ENCODE measurements at regions of chr7 and their contacts with region 1.

Region 1: GRCh38 chr7:107157091-107157490 is 11.7 kb upstream of the HBP1 start:
- DNase-seq: no peak
- H3K4me3 Mint-ChIP-seq: no peak overlapping the region
- H3K27ac Mint-ChIP-seq: no peak overlapping the region
- H3K4me1 Mint-ChIP-seq: no peaks in the 10 kb centered on the region
- H3K27me3 Mint-ChIP-seq: peaks cover 10% of the 10 kb centered on the region

Region 2: GRCh38 chr7:106947244-106947728 is 209.8 kb before region 1 on chr7:
- intact Hi-C with region 1: loop called (anchors 2 kb)
- DNase-seq: peak; percentile 1
- H3K4me3 Mint-ChIP-seq: no peak overlapping the region
- H3K27ac Mint-ChIP-seq: no peak overlapping the region
- H3K4me1 Mint-ChIP-seq: no peaks in the 10 kb centered on the region
- H3K27me3 Mint-ChIP-seq: peaks cover 3% of the 10 kb centered on the region

Measured in activated T-helper 1 cell treated with anti-CD3 and anti-CD28 coated beads, Interleukin-12 subunit alpha, Interleukin-12 subunit beta, Interleukin-2, Interleukin-4 antibody, amounts not matched to agents 30 ng/mL and 10 ng/mL and 1 ng/mL, durations not matched to agents 14 hours and 24 hours and 36 hours (primary cell).